H1 (cell line): ENCODE measurements at regions of chr2 and their contacts with region 1.

Region 1: GRCh38 chr2:170377500-170378207 is 199.7 kb downstream of the MYO3B start:
- DNase-seq: no peak
- H3K4me3 ChIP-seq: no peak overlapping the region
- H3K27ac ChIP-seq: no peak overlapping the region
- H3K4me1 ChIP-seq: 0 out of 7 replicates have a peak, but pooled peaks cover 0 to 2% (median 0%) of the 10 kb centered on the region in 4 experiments
- H3K27me3 ChIP-seq: no peaks in the 10 kb centered on the region; a peak in 2 of 7 replicates
- CTCF ChIP-seq: no peak
- EP300 ChIP-seq: no peak
- POLR2A ChIP-seq: no peak
- RAD21 ChIP-seq: no peak

Region 2: DNA sequence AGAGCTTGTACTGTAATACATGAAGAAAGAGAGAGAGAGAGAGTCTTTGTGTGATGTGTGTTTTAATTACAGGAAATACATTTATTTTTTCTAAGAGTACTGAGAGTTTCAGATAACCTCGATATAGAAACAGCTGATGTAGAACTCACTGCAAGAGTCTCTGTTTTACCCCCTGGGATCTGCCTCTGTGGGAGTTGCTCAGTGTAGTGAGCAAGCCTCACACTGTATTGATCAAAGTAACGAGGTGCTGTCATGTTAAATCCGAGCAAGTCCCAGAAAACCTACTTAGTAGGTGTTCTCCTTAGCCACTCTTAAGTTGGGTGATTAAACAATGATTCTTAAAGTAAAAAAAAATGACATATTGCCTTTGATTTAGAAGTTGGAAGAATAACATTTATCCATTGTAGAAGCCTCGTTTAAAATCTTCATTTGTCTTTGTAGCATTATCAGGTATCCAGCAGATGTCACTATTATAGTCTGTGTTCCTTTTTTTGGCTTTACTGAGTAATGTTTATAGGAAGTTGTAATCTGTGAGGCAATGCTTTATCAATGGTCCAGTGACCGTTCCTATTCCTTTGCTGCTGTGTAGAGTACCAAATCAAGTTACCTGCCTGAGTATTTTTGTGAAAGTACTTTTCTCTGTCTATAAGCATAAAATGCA is 19.3 kb after region 1 on chr2:
- CTCF ChIA-PET with region 1: interaction called, 11 read pairs
- POLR2A ChIA-PET with region 1: no interaction called
- DNase-seq: no peak
- H3K4me3 ChIP-seq: no peak overlapping the region
- H3K27ac ChIP-seq: no peak overlapping the region
- H3K4me1 ChIP-seq: no peaks in the 10 kb centered on the region
- H3K27me3 ChIP-seq: no peaks in the 10 kb centered on the region
- CTCF ChIP-seq: peak in 2 of 3 experiments; percentile 5 to 22; a peak in 2 of 4 replicates
- EP300 ChIP-seq: no peak
- POLR2A ChIP-seq: no peak
- RAD21 ChIP-seq: peak; percentile 40 to 48

Region 3: GRCh38 chr2:170425281-170425751 is 47.7 kb after region 1 on chr2:
- CTCF ChIA-PET with region 1: no interaction called
- POLR2A ChIA-PET with region 1: no interaction called
- DNase-seq: no peak
- H3K4me3 ChIP-seq: no peak overlapping the region
- H3K27ac ChIP-seq: no peak overlapping the region
- H3K4me1 ChIP-seq: no peaks in the 10 kb centered on the region
- H3K27me3 ChIP-seq: no peaks in the 10 kb centered on the region; a peak in 1 of 7 replicates
- CTCF ChIP-seq: no peak
- EP300 ChIP-seq: no peak
- POLR2A ChIP-seq: no peak
- RAD21 ChIP-seq: no peak

Region 4: GRCh38 chr2:170639635-170640034 is 262.0 kb after region 1 on chr2:
- CTCF ChIA-PET with region 1: no interaction called
- POLR2A ChIA-PET with region 1: no interaction called
- DNase-seq: no peak
- H3K4me3 ChIP-seq: no peak overlapping the region
- H3K27ac ChIP-seq: no peak overlapping the region
- H3K4me1 ChIP-seq: no peaks in the 10 kb centered on the region
- H3K27me3 ChIP-seq: no peaks in the 10 kb centered on the region; a peak in 1 of 7 replicates
- CTCF ChIP-seq: no peak
- EP300 ChIP-seq: no peak
- POLR2A ChIP-seq: no peak
- RAD21 ChIP-seq: no peak